H1 (cell line): ENCODE measurements at regions of chrX and their contacts with region 1.

Region 1: GRCh38 chrX:46903458-46904242 is 8.6 kb upstream of the JADE3 start:
- DNase-seq: peak; percentile 50 to 69
- H3K4me3 ChIP-seq: peak overlapping the region; percentile 13 to 62 (median 50); a peak in 7 of 8 replicates
- H3K27ac ChIP-seq: no peak overlapping the region
- H3K4me1 ChIP-seq: no peaks in the 10 kb centered on the region; a peak in 1 of 7 replicates
- H3K27me3 ChIP-seq: no peaks in the 10 kb centered on the region
- CTCF ChIP-seq: peak; percentile 59 to 78 (median 71)
- EP300 ChIP-seq: no peak
- POLR2A ChIP-seq: no peak
- RAD21 ChIP-seq: peak; percentile 62 to 72

Region 2: GRCh38 chrX:46978341-46979291 is 75.0 kb after region 1 on chrX:
- CTCF ChIA-PET with region 1: interaction called, 12 read pairs
- POLR2A ChIA-PET with region 1: no interaction called
- DNase-seq: peak; percentile 46 to 84
- H3K4me3 ChIP-seq: no peak overlapping the region
- H3K27ac ChIP-seq: no peak overlapping the region
- H3K4me1 ChIP-seq: peaks cover 0 to 4% (median 1%) of the 10 kb centered on the region in 4 experiments; a peak in 2 of 7 replicates
- H3K27me3 ChIP-seq: no peaks in the 10 kb centered on the region
- CTCF ChIP-seq: peak; percentile 51 to 79 (median 67)
- EP300 ChIP-seq: no peak
- POLR2A ChIP-seq: no peak
- RAD21 ChIP-seq: peak; percentile 67 to 75